ENCODE measurements at regions of chr9 and their contacts with region 1.

Region 1: DNA sequence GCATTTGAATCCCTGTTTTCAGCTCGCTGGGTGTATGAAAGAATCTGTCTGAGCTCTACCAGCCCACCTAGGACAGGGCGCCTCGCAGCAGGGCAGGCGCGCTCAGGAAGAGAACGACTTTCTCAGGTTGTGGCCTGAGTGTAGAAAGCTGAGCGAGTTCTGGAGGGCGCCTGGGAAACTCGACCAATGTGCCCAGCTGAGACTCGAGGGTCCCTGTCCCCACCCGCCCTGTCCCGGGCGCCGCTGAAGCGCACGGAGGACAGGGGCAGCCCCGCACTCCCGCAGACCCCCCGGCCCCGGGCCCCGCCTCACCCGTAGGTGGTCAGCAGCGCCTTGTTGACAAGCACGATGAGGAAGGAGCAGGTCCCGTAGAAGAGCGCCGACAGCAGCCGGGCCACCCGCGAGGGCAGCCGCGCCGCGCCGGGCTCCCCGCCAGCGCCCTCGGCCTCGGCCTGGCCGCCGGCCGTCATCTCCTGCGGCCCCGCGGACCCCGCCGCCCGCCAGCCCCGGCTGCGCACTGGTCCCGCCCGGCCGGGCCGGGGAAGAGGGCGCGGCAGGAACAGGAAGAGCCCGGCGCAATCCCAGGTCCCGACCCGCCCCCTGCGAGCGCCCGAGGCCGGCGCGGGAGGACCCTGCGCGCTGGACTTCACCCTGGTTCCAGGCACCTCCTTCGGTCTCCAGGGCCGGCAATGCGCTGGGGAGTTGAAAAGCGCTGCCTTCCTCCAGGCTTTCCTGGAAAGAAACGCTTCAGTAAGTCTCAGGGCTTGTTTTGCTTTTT is at the start of gene SLC35D2:
- DNase-seq: peak; percentile 75 to 84 (median 76)
- ATAC-seq: peak; percentile 91 to 97 (median 96)
- H3K4me3 ChIP-seq: peak within 1 kb of the TSS; percentile 47 to 98 (median 72)
- H3K27ac ChIP-seq: peak within 1 kb of the TSS; percentile 76 to 92 (median 87)
- H3K4me1 ChIP-seq: peaks cover 0 to 30% (median 12%) of the 10 kb centered on the region in 12 donors
- H3K27me3 ChIP-seq: no peaks in the 10 kb centered on the region
- CTCF ChIP-seq: no peak
- POLR2A ChIP-seq: peak in 1 of 2 donors; percentile 39
- total RNA-seq, gene SLC35D2: 10.5 to 23.1 (median 15.9) TPM

Region 2: DNA sequence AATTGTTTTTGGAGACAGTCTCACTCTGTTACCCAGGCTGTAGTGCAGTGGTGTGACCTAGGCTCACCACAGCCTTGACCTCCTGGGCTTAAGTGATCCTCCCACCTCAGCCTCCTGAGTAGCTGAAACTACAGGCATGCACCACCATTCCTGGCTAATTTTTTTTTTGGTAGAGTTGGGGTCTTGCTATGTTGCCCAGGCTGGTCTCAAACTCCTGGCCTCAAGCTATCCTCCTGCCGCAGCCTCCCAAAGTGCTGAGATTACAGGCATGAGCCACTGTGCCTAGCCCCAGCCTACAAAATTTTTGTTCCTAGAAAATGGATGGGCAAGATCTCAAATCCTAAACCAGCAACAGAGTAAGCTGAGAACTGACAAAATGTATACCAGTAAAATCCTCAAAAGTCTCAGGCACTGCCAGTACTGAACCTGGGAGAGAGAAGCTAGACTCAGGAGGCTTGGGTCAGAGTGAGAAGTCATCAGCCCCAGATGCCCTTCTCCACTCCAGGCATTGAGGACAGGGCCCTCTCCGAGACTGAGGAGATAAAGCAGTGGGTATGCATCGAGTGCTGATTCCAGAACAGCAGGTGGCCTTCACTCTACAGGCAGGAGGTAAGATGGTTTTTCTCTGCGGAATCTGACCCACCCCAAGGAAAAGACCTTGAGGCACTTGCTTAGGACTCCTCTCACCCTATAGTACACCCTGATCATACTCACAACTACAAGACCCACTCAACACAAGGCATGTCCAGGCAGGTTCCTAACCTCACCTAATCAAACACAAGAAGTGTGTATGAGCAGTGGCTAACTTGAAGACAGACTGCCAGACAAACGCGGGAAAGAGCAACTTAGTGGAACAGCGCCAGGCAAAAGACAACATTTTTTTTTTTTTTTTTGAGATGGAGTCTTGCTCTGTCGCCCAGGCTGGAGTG is 116.8 kb before region 1 on chr9:
- intact Hi-C with region 1: no loop called
- DNase-seq: no peak
- ATAC-seq: no peak
- H3K4me3 ChIP-seq: no peak overlapping the region
- H3K27ac ChIP-seq: no peak overlapping the region
- H3K4me1 ChIP-seq: no peaks in the 10 kb centered on the region
- H3K27me3 ChIP-seq: no peaks in the 10 kb centered on the region
- CTCF ChIP-seq: no peak
- POLR2A ChIP-seq: no peak

Region 3: GRCh38 chr9:96344458-96345180 is 38.7 kb before region 1 on chr9:
- intact Hi-C with region 1: loop called in 1 of 10 experiments (anchors 5 kb)
- DNase-seq: peak; percentile 57 to 66 (median 63)
- ATAC-seq: peak; percentile 70 to 94 (median 91)
- H3K4me3 ChIP-seq: no peak overlapping the region
- H3K27ac ChIP-seq: peak overlapping the region in 11 of 12 donors; percentile 4 to 73 (median 46)
- H3K4me1 ChIP-seq: peaks cover 4 to 29% (median 10%) of the 10 kb centered on the region in 12 donors
- H3K27me3 ChIP-seq: no peaks in the 10 kb centered on the region
- CTCF ChIP-seq: no peak
- POLR2A ChIP-seq: no peak

Region 4: DNA sequence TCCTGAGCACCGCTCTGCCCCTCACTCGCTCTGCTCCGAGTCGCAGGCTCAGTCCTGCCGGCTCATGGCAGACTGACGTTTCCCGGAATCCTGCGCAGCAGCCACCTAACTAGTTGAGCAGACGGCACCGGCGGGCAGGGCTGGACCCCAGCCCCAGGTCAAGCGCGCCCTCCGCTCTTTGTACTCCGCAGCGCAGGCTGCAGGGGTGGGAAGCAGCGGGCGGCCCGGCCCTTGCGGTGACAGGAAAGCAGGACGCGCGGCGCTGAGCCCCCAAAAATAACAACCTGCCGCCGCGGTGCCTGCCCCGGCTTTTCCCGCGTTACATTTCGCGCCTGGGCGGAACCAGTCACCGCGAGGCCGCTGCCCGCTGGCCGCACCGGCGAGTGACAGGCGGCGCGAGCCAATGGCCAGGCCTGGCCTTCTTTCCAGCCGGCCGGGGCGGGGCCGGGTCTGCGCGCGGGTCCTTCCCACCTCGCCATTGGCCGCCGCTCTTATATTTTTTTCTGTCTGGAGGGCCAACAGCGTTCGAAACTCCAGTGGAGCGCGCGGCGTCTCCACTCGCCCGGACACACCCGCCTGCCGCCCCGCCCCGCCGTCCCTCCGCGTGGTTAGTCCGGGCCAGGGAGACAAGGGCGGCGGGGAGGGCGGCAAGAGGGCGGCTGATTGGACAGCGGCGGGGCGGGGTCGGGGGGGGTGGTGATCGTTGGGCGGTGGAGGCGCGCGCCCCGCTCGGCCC is 34.9 kb after region 1 on chr9 and contains the start of gene ZNF367:
- intact Hi-C with region 1: loop called in 5 of 10 experiments (anchors 2 to 5 kb)
- DNase-seq: peak; percentile 98 to 99 (median 99)
- ATAC-seq: peak; percentile 91 to 93 (median 93)
- H3K4me3 ChIP-seq: peak within 1 kb of the TSS; percentile 54 to 97 (median 83)
- H3K27ac ChIP-seq: peak within 1 kb of the TSS; percentile 99 to 100 (median 100)
- H3K4me1 ChIP-seq: peaks cover 6 to 51% (median 29%) of the 10 kb centered on the region in 12 donors
- H3K27me3 ChIP-seq: no peaks in the 10 kb centered on the region
- CTCF ChIP-seq: no peak
- POLR2A ChIP-seq: no peak
- total RNA-seq, gene ZNF367: 2.4 to 5.9 (median 3.2) TPM

Measured in heart left ventricle (tissue), 16 donors.